Naive thymus-derived CD4-positive, alpha-beta T cell (primary cell): ENCODE measurements at regions of chr1 and their contacts with region 1.

Region 1: GRCh38 chr1:79040424-79041082 is 34.0 kb upstream of the ADGRL4 start:
- DNase-seq: no peak
- ATAC-seq: no peak
- H3K4me3 ChIP-seq: no peak overlapping the region
- H3K4me3 Mint-ChIP-seq: peak overlapping the region in 6 of 10 donors; percentile 0 to 84 (median 28)
- H3K27ac ChIP-seq: no peak overlapping the region
- H3K27ac Mint-ChIP-seq: peak overlapping the region in 1 of 9 donors; percentile 68
- H3K4me1 ChIP-seq: no peaks in the 10 kb centered on the region
- H3K4me1 Mint-ChIP-seq: peaks cover 0 to 14% (median 4%) of the 10 kb centered on the region in 7 donors
- H3K27me3 ChIP-seq: no peaks in the 10 kb centered on the region
- H3K27me3 Mint-ChIP-seq: peaks cover 0 to 4% (median 0%) of the 10 kb centered on the region in 5 donors

Region 2: GRCh38 chr1:77866296-77866695 is 1174.3 kb before region 1 on chr1:
- CTCF ChIA-PET with region 1: no interaction called
- POLR2A ChIA-PET with region 1: no interaction called
- intact Hi-C with region 1: no loop called
- DNase-seq: no peak
- ATAC-seq: no peak
- H3K4me3 ChIP-seq: no peak overlapping the region
- H3K4me3 Mint-ChIP-seq: no peak overlapping the region
- H3K27ac ChIP-seq: no peak overlapping the region
- H3K27ac Mint-ChIP-seq: no peak overlapping the region
- H3K4me1 ChIP-seq: no peaks in the 10 kb centered on the region
- H3K4me1 Mint-ChIP-seq: no peaks in the 10 kb centered on the region
- H3K27me3 ChIP-seq: no peaks in the 10 kb centered on the region
- H3K27me3 Mint-ChIP-seq: no peaks in the 10 kb centered on the region

Region 3: GRCh38 chr1:79052829-79053449 is 12.4 kb after region 1 on chr1:
- CTCF ChIA-PET with region 1: no interaction called
- POLR2A ChIA-PET with region 1: no interaction called
- intact Hi-C with region 1: loop called in 1 of 2 experiments (anchors 1 kb)
- DNase-seq: no peak
- ATAC-seq: no peak
- H3K4me3 ChIP-seq: no peak overlapping the region
- H3K4me3 Mint-ChIP-seq: peak overlapping the region in 9 of 10 donors; percentile 6 to 76 (median 24)
- H3K27ac ChIP-seq: no peak overlapping the region
- H3K27ac Mint-ChIP-seq: peak overlapping the region in 1 of 9 donors; percentile 69
- H3K4me1 ChIP-seq: no peaks in the 10 kb centered on the region
- H3K4me1 Mint-ChIP-seq: peaks cover 0 to 9% (median 0%) of the 10 kb centered on the region in 7 donors
- H3K27me3 ChIP-seq: no peaks in the 10 kb centered on the region
- H3K27me3 Mint-ChIP-seq: no peaks in the 10 kb centered on the region

Region 4: DNA sequence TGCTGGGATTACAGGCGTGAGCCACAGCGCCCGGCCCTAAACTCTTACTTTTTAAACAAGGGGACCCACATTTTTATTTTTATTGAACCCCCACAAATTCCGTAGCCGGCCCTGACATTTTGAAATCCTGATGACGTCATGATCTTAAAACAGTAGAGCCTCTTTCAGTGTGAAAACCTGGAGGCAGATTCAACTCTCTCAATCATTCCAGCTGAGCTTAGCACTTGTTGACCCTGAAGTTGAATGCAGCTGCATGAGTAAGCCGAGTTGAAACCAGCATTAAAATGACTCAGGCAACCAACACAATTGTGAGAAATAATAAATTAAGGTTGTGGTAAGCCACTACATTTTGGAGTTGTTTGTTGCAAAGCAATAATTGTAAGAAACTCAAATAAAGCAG is 59.8 kb after region 1 on chr1:
- CTCF ChIA-PET with region 1: no interaction called
- POLR2A ChIA-PET with region 1: no interaction called
- intact Hi-C with region 1: no loop called
- DNase-seq: no peak
- ATAC-seq: no peak
- H3K4me3 ChIP-seq: no peak overlapping the region
- H3K4me3 Mint-ChIP-seq: no peak overlapping the region
- H3K27ac ChIP-seq: no peak overlapping the region
- H3K27ac Mint-ChIP-seq: no peak overlapping the region
- H3K4me1 ChIP-seq: no peaks in the 10 kb centered on the region
- H3K4me1 Mint-ChIP-seq: no peaks in the 10 kb centered on the region
- H3K27me3 ChIP-seq: no peaks in the 10 kb centered on the region
- H3K27me3 Mint-ChIP-seq: no peaks in the 10 kb centered on the region